Gastrocnemius medialis (tissue), 4 donors: ENCODE measurements at regions of chr4 and their contacts with region 1.

Region 1: GRCh38 chr4:48340965-48341775 is at the start of gene SLAIN2:
- DNase-seq: peak; percentile 99
- ATAC-seq: peak; percentile 85 to 90
- H3K4me3 ChIP-seq: peak within 1 kb of the TSS; percentile 75 to 97 (median 90)
- H3K27ac ChIP-seq: peak within 1 kb of the TSS; percentile 95 to 99 (median 97)
- H3K4me1 ChIP-seq: peaks cover 50 to 57% of the 10 kb centered on the region in 2 donors
- H3K27me3 ChIP-seq: no peaks in the 10 kb centered on the region
- CTCF ChIP-seq: peak; percentile 14 to 66 (median 47)
- POLR2A ChIP-seq: peak; percentile 89 to 91
- total RNA-seq, gene SLAIN2: 64.3 to 211 (median 138) TPM

Region 2: GRCh38 chr4:47463235-47463956 is 877.8 kb before region 1 on chr4 and contains the start of gene COMMD8:
- in situ Hi-C with region 1: no loop called
- intact Hi-C with region 1: loop called (anchors 10 kb)
- DNase-seq: peak; percentile 87 to 89
- ATAC-seq: peak; percentile 97 to 98
- H3K4me3 ChIP-seq: peak within 1 kb of the TSS; percentile 74 to 88 (median 85)
- H3K27ac ChIP-seq: peak within 1 kb of the TSS; percentile 65 to 81 (median 76)
- H3K4me1 ChIP-seq: peaks cover 0 to 12% of the 10 kb centered on the region in 2 donors
- H3K27me3 ChIP-seq: no peaks in the 10 kb centered on the region
- CTCF ChIP-seq: peak in 4 of 5 experiments; percentile 38 to 47 (median 42)
- POLR2A ChIP-seq: peak in 1 of 2 donors; percentile 6
- total RNA-seq, gene COMMD8: 4.8 to 8.5 (median 6.4) TPM

Region 3: DNA sequence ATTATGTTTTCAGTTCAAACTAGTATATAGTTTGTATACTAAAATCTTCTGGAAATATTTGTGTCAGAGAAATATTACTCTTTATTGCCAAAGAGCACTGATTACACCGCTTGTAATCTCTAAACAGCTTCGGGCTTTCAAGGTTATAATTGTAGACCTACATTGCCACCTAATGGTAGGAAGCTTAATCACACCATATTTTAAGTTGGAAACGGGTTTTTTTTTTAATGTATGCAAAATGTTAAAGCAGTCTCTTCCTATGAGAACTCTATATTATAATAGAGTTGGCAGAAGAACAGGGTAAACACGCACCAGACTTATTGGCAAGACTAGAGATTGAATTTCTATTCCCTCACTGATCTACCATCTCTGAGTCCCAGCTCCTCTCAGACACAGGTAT is 407.3 kb before region 1 on chr4:
- in situ Hi-C with region 1: no loop called
- intact Hi-C with region 1: no loop called
- DNase-seq: no peak
- ATAC-seq: no peak
- H3K4me3 ChIP-seq: no peak overlapping the region
- H3K27ac ChIP-seq: no peak overlapping the region
- H3K4me1 ChIP-seq: no peaks in the 10 kb centered on the region
- H3K27me3 ChIP-seq: no peaks in the 10 kb centered on the region
- CTCF ChIP-seq: peak in 4 of 5 experiments; percentile 26 to 60 (median 34)
- POLR2A ChIP-seq: no peak

Region 4: GRCh38 chr4:48269861-48270522 is 71.2 kb before region 1 on chr4:
- in situ Hi-C with region 1: no loop called
- intact Hi-C with region 1: loop called (anchors 2 kb)
- DNase-seq: peak; percentile 90
- ATAC-seq: peak; percentile 91 to 92
- H3K4me3 ChIP-seq: peak overlapping the region; percentile 92 to 100 (median 94)
- H3K27ac ChIP-seq: peak overlapping the region; percentile 88 to 94 (median 92)
- H3K4me1 ChIP-seq: peaks cover 5% of the 10 kb centered on the region in 2 donors
- H3K27me3 ChIP-seq: no peaks in the 10 kb centered on the region
- CTCF ChIP-seq: peak in 3 of 5 experiments; percentile 15 to 25 (median 19)
- POLR2A ChIP-seq: peak; percentile 38 to 52

Region 5: GRCh38 chr4:48329976-48330375 is 11.2 kb before region 1 on chr4:
- in situ Hi-C with region 1: no loop called
- intact Hi-C with region 1: loop called (anchors 1 kb)
- DNase-seq: no peak
- ATAC-seq: no peak
- H3K4me3 ChIP-seq: no peak overlapping the region
- H3K27ac ChIP-seq: peak overlapping the region in 3 of 4 donors; percentile 5 to 83 (median 80)
- H3K4me1 ChIP-seq: peaks cover 11 to 36% of the 10 kb centered on the region in 2 donors
- H3K27me3 ChIP-seq: no peaks in the 10 kb centered on the region
- CTCF ChIP-seq: no peak
- POLR2A ChIP-seq: no peak

Region 6: GRCh38 chr4:48727666-48728459 is 386.7 kb after region 1 on chr4:
- in situ Hi-C with region 1: no loop called
- intact Hi-C with region 1: no loop called
- DNase-seq: no peak
- ATAC-seq: no peak
- H3K4me3 ChIP-seq: no peak overlapping the region
- H3K27ac ChIP-seq: no peak overlapping the region
- H3K4me1 ChIP-seq: peaks cover 12 to 37% of the 10 kb centered on the region in 2 donors
- H3K27me3 ChIP-seq: no peaks in the 10 kb centered on the region
- CTCF ChIP-seq: no peak
- POLR2A ChIP-seq: no peak

Region 7: DNA sequence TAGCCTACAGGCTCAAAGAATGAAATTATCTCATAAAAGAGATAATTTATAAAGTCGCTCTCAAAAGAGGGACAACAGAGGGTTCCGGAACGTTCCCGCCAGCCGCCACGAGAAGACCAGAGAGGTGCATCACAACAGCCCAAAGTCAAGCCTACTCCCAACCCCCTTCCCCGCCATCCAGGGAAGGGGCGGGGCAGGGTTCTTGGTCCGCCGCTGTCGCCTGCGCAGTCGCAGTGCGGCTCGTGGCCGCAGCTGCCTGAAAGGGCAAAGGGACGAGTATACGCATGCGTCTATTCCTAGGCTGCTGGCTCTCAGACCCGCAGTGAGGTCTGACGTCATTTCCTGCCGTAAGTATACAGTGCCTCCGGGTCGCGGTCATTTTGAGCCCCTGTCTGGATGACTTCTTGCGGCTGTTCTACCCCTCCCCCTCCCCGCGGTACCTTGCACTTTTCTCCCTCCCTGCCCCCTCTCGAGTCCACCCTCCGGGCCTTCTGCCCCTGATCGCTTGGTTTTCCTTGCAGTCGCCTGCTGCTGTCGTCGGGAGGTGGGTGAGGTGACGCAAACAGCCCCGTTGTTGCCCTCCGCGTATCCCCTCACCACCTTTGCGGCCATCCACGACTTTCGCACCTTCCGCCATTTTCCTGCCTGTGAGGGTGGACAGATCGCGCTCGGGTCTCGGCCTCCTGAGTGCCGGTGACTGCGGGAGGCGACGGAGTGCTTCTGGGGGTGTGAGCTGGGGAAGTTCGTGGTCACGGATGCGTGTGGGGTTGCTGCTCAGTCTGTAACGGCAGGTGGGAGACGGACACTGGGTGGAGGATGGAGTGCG is 489.7 kb after region 1 on chr4 and contains the start of gene OCIAD1:
- in situ Hi-C with region 1: loop called in 1 of 4 experiments (anchors 25 kb)
- intact Hi-C with region 1: loop called (anchors 5 kb)
- DNase-seq: peak; percentile 99
- ATAC-seq: peak; percentile 100
- H3K4me3 ChIP-seq: peak within 1 kb of the TSS; percentile 80 to 100 (median 92)
- H3K27ac ChIP-seq: peak within 1 kb of the TSS; percentile 95 to 96 (median 96)
- H3K4me1 ChIP-seq: peaks cover 17 to 22% of the 10 kb centered on the region in 2 donors
- H3K27me3 ChIP-seq: no peaks in the 10 kb centered on the region
- CTCF ChIP-seq: peak in 1 of 5 experiments; percentile 7
- POLR2A ChIP-seq: peak; percentile 38 to 47
- total RNA-seq, gene OCIAD1: 84.4 to 157 (median 126) TPM